ENCODE measurements at regions of chr1 and their contacts with region 1.

Region 1: GRCh38 chr1:31923901-31924535 is 14.2 kb downstream of the PTP4A2 start:
- DNase-seq: no peak
- H3K4me3 Mint-ChIP-seq: peak overlapping the region; percentile 35
- H3K27ac Mint-ChIP-seq: peak overlapping the region; percentile 37
- H3K4me1 Mint-ChIP-seq: peaks cover 84% of the 10 kb centered on the region
- H3K27me3 Mint-ChIP-seq: no peaks in the 10 kb centered on the region

Region 2: DNA sequence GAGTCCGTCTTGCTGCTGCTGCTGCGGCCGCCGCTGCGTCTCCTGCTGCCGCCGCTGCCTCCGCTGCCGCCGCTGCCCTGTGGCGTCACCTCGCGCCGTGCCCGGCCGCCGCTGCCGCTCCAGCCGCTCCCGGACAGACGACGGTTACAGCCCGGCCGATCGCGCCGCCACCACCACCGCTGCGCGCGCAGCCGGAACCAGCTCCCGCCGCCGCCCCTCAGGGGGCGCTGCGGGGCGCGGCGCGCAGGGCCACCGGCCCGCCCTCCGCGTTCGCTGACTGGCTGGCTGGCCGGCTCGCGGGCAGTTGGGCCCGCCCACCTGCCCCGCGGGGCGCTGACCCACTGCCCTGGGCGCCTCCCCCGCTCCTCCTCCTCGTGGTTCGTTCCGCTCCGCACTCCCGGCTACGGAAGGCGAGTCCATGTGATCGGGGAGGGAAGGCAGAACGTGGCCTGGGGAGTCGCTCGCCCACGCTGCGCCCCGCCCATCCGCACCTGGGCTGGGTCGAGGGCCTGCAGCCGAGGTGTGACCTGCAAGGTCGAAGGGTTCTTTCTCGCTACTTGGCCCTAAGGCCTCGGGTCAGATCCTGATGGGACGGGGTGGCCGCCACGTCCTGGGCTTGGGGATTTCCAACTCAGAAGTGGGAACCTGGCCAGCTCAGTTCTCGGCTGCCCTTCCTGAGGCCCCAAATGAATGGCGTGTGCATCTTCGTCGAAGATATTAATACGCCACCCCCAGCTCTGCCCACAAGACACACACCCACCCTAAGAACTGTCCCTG is 14.3 kb after region 1 on chr1 and contains the start of gene PTP4A2:
- CTCF ChIA-PET with region 1: interaction called, 10 read pairs
- POLR2A ChIA-PET with region 1: interaction called, 4 read pairs
- DNase-seq: peak; percentile 85
- H3K4me3 Mint-ChIP-seq: peak within 1 kb of the TSS; percentile 89
- H3K27ac Mint-ChIP-seq: peak within 1 kb of the TSS; percentile 97
- H3K4me1 Mint-ChIP-seq: peaks cover 79% of the 10 kb centered on the region
- H3K27me3 Mint-ChIP-seq: no peaks in the 10 kb centered on the region
- total RNA-seq, gene PTP4A2: 334 to 347 TPM

Measured in activated CD4-positive, alpha-beta T cell treated with anti-CD3 and anti-CD28 coated beads, Interleukin-2, amount 10 ng/mL, durations not matched to agents 7 days and 5 days (primary cell).